ENCODE measurements at regions of chr12 and their contacts with region 1.

Region 1: GRCh38 chr12:12736759-12737676 is 19.9 kb downstream of the CDKN1B start:
- DNase-seq: no peak
- H3K27ac ChIP-seq: no peak overlapping the region
- CTCF ChIP-seq: peak; percentile 34; the same call in 1 of the 2 replicates

Region 2: GRCh38 chr12:12714276-12715021 is 22.6 kb before region 1 on chr12:
- CTCF ChIA-PET with region 1: interaction called, 17 read pairs
- POLR2A ChIA-PET with region 1: no interaction called
- DNase-seq: no peak
- H3K27ac ChIP-seq: peak overlapping the region; percentile 25; the same call in 1 of the 2 replicates
- CTCF ChIP-seq: no peak

Region 3: DNA sequence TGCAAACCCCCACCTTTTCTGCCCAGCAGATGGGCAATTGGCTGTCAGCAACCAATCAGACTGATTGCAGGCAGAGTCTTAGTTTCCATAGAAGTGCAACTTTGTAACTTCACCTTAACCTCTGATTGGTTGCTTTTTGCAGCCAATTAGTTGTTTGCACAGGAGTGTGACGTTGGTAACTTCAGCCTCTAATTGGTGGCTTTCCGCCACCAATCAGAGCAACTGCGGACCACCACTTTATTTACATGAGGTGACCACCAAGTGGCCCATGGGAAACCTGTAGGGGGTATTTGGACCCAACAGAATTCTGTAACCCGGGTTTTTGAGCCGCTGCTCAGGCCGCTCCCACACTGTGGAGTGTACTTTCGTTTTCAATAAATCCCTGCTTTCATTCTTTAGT is 12.4 kb after region 1 on chr12:
- CTCF ChIA-PET with region 1: interaction called, 12 read pairs
- POLR2A ChIA-PET with region 1: no interaction called
- DNase-seq: no peak
- H3K27ac ChIP-seq: no peak overlapping the region
- CTCF ChIP-seq: no peak

Measured in RWPE1 (cell line).